ENCODE measurements at regions of chr2 and their contacts with region 1.

Region 1: GRCh38 chr2:69717861-69718273 is 24.1 kb upstream of the ANXA4 start:
- DNase-seq: no peak
- H3K4me3 ChIP-seq: no peak overlapping the region
- H3K27ac ChIP-seq: no peak overlapping the region
- H3K4me1 ChIP-seq: peaks cover 0 to 5% (median 2%) of the 10 kb centered on the region in 4 donors
- H3K27me3 ChIP-seq: no peaks in the 10 kb centered on the region
- CTCF ChIP-seq: no peak
- EP300 ChIP-seq: no peak
- POLR2A ChIP-seq: no peak

Region 2: GRCh38 chr2:69375494-69376353 is 342.1 kb before region 1 on chr2:
- in situ Hi-C with region 1: no loop called
- intact Hi-C with region 1: no loop called
- DNase-seq: no peak
- H3K4me3 ChIP-seq: no peak overlapping the region
- H3K27ac ChIP-seq: peak overlapping the region in 2 of 4 donors; percentile 0 to 18
- H3K4me1 ChIP-seq: peaks cover 0 to 31% (median 3%) of the 10 kb centered on the region in 4 donors
- H3K27me3 ChIP-seq: no peaks in the 10 kb centered on the region
- CTCF ChIP-seq: peak; percentile 49 to 71 (median 61)
- EP300 ChIP-seq: no peak
- POLR2A ChIP-seq: no peak

Region 3: GRCh38 chr2:69559442-69560146 is 158.3 kb before region 1 on chr2:
- in situ Hi-C with region 1: loop called (anchors 5 to 25 kb)
- intact Hi-C with region 1: loop called (anchors 5 kb)
- DNase-seq: no peak
- H3K4me3 ChIP-seq: no peak overlapping the region
- H3K27ac ChIP-seq: peak overlapping the region in 3 of 4 donors; percentile 45 to 65 (median 51)
- H3K4me1 ChIP-seq: peaks cover 0 to 49% (median 11%) of the 10 kb centered on the region in 4 donors
- H3K27me3 ChIP-seq: no peaks in the 10 kb centered on the region
- CTCF ChIP-seq: peak; percentile 51 to 93 (median 64)
- EP300 ChIP-seq: no peak
- POLR2A ChIP-seq: no peak

Region 4: GRCh38 chr2:69565431-69565839 is 152.4 kb before region 1 on chr2:
- in situ Hi-C with region 1: loop called (anchors 5 to 25 kb)
- intact Hi-C with region 1: loop called (anchors 5 kb)
- DNase-seq: peak; percentile 64
- H3K4me3 ChIP-seq: no peak overlapping the region
- H3K27ac ChIP-seq: peak overlapping the region in 1 of 4 donors; percentile 50
- H3K4me1 ChIP-seq: peaks cover 0 to 52% (median 7%) of the 10 kb centered on the region in 4 donors
- H3K27me3 ChIP-seq: no peaks in the 10 kb centered on the region
- CTCF ChIP-seq: peak; percentile 51 to 66 (median 63)
- EP300 ChIP-seq: no peak
- POLR2A ChIP-seq: no peak

Measured in transverse colon (tissue), 4 donors.